ENCODE measurements at regions of chr1 and their contacts with region 1.

Region 1: GRCh38 chr1:156385534-156386031 is 16.6 kb downstream of the RHBG start:
- DNase-seq: peak; percentile 42 to 59
- H3K4me3 ChIP-seq: no peak overlapping the region
- H3K27ac ChIP-seq: no peak overlapping the region
- H3K4me1 ChIP-seq: no peaks in the 10 kb centered on the region
- H3K27me3 ChIP-seq: no peaks in the 10 kb centered on the region
- CTCF ChIP-seq: peak; percentile 68 to 90 (median 82)
- POLR2A ChIP-seq: no peak

Region 2: GRCh38 chr1:156445789-156446263 is 60.2 kb after region 1 on chr1:
- intact Hi-C with region 1: loop called (anchors 5 kb)
- DNase-seq: peak; percentile 72 to 79
- H3K4me3 ChIP-seq: no peak overlapping the region
- H3K27ac ChIP-seq: no peak overlapping the region
- H3K4me1 ChIP-seq: peaks cover 0 to 3% of the 10 kb centered on the region in 2 donors
- H3K27me3 ChIP-seq: peaks cover 14% of the 10 kb centered on the region
- CTCF ChIP-seq: peak; percentile 76 to 91 (median 90)
- POLR2A ChIP-seq: no peak